Prostate gland (tissue), 2 donors: ENCODE measurements at regions of chr3 and their contacts with region 1.

Region 1: DNA sequence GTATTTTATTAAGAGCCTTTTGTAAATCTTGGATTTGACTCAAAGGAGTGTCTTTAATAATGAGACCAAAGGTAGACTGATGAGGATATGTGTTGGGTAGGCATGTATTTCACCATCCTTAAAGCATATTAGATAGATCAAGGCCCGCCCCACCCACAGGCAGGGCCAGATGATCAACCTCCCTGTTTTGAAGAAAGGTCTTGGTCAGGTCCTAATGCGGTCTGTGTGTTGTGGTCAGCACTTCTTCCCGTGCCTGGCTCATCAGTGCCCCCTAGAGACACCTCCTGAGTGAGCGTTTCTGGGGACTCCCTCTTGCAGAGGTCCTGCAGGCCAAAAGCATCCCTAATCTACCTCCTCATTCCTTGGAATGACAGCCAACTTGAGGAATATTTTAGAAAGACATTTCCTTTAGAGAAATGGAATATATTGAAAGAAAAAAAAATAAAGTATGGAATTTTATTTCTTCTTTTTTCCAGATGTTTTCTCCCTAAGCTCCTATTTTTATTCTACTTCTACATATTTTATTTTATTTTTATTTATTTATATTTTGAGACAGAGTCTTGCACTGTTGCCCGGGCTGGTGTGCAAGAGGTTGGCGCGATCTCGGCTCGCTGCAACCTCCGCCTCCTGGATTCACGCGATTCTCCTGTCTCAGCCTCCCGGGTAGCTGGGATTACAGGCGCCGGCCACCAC is 6.0 kb downstream of the TM4SF4 start:
- DNase-seq: peak; percentile 59
- H3K4me3 ChIP-seq: no peak overlapping the region
- H3K27ac ChIP-seq: no peak overlapping the region
- H3K4me1 ChIP-seq: no peaks in the 10 kb centered on the region
- H3K27me3 ChIP-seq: no peaks in the 10 kb centered on the region
- CTCF ChIP-seq: peak; percentile 27 to 72 (median 68)
- POLR2A ChIP-seq: no peak

Region 2: DNA sequence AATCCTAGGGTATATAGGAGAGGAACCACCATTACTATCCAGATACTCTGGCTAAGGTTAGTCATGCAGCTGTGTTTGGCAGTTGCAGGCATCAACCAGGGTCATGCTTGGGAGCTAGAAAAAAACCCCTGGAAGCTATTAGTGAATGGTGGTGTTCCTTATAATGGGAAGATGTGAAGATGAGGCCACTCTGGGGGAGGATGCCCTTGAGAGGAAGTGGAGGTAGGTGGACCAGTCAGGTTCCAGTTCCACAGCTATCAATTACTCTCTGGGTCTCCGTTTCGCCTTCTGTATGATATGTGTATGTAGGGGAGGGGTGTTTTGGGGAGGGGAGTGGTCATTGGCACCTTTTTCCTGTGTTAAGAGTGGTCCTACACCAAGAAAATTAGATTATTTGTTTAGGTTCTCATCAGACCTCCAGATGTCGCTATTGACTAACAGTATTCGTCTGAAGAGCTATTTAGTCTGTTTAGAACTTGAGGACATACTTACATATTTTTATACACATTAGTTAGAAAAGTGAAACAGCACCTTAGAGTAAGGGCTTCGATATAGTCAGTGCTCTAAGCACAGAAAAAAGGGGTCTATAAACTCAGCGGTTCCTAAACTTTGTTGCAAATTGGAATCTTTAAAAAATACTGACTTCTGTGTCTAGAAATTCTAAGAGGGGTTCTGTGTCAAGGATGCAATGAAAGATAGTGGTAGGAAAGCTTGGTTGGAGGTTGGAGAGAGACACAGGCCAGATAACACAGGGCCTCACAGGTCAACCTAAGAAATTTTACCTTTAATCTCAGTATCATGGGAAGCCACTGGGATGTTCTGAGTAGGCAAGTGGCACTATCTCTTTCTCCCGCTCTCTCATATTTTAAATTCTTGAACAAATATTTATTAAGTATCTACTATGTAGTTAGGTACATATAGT is 360.2 kb before region 1 on chr3:
- intact Hi-C with region 1: loop called (anchors 5 kb)
- DNase-seq: peak; percentile 23
- H3K4me3 ChIP-seq: no peak overlapping the region
- H3K27ac ChIP-seq: no peak overlapping the region
- H3K4me1 ChIP-seq: no peaks in the 10 kb centered on the region
- H3K27me3 ChIP-seq: no peaks in the 10 kb centered on the region
- CTCF ChIP-seq: peak; percentile 39 to 80 (median 70)
- POLR2A ChIP-seq: no peak

Region 3: GRCh38 chr3:149273096-149273751 is 207.2 kb before region 1 on chr3:
- intact Hi-C with region 1: loop called (anchors 10 kb)
- DNase-seq: peak; percentile 51
- H3K4me3 ChIP-seq: no peak overlapping the region
- H3K27ac ChIP-seq: no peak overlapping the region
- H3K4me1 ChIP-seq: no peaks in the 10 kb centered on the region
- H3K27me3 ChIP-seq: no peaks in the 10 kb centered on the region
- CTCF ChIP-seq: peak; percentile 88 to 96 (median 94)
- POLR2A ChIP-seq: no peak

Region 4: DNA sequence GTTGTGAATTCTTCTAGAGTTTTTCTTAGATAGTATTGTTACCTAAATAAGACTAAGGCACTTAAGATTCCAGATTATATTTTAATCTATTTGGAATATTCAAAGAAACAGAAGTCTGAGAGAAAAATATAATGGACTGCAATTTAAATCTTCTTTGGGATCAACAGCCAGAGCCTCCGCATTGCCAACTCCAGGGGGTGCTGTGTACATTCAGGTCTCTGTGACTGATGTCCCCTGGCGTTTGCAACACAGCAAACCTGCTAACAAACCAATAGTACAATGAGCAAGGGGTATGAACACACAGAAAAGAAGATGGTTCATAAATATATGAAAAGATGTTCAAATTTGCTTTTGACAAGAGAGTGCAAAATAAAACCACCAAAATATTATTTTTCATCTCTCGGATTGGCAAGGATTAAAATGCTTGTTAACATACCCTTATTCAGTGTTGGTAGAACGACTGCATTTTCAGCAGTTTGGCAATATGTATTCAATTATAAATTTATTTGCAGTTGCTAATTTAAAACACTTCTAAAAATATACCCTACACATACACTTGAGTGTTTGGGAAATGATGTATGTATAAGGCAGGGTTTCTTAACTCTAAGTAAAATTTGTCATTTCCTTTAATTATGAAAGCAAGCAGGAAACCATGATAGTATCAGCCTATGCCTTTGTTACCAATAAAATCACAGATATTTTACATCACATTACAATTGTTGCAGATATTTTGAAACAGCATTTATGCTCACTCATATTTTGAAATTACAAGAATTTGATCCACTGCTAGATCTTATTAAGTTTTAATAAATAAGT is 86.9 kb before region 1 on chr3:
- intact Hi-C with region 1: loop called (anchors 2 kb)
- DNase-seq: no peak
- H3K4me3 ChIP-seq: no peak overlapping the region
- H3K27ac ChIP-seq: no peak overlapping the region
- H3K4me1 ChIP-seq: peaks cover 4% of the 10 kb centered on the region
- H3K27me3 ChIP-seq: no peaks in the 10 kb centered on the region
- CTCF ChIP-seq: peak in 3 of 4 experiments; percentile 64 to 79 (median 69)
- POLR2A ChIP-seq: no peak